ENCODE measurements at regions of chr2 and their contacts with region 1.

Region 1: GRCh38 chr2:74458132-74458925 is at the start of gene WBP1:
- DNase-seq: peak; percentile 87
- ATAC-seq: peak; percentile 81
- H3K4me3 Mint-ChIP-seq: peak within 1 kb of the TSS; percentile 99
- H3K27ac Mint-ChIP-seq: peak within 1 kb of the TSS; percentile 100
- H3K4me1 Mint-ChIP-seq: peaks cover 62% of the 10 kb centered on the region
- H3K27me3 Mint-ChIP-seq: no peaks in the 10 kb centered on the region
- CTCF ChIP-seq: no peak
- total RNA-seq, gene WBP1: 61.4 and 65.3 TPM in 2 replicates

Region 2: GRCh38 chr2:74472086-74472944 is 14.0 kb after region 1 on chr2 and contains the start of gene MRPL53:
- CTCF ChIA-PET with region 1: interaction called, 3 read pairs
- POLR2A ChIA-PET with region 1: interaction called, 127 read pairs
- intact Hi-C with region 1: loop called (anchors 1 kb)
- DNase-seq: peak; percentile 91
- ATAC-seq: peak; percentile 89
- H3K4me3 Mint-ChIP-seq: peak within 1 kb of the TSS; percentile 97
- H3K27ac Mint-ChIP-seq: peak within 1 kb of the TSS; percentile 97
- H3K4me1 Mint-ChIP-seq: peaks cover 23% of the 10 kb centered on the region
- H3K27me3 Mint-ChIP-seq: no peaks in the 10 kb centered on the region
- CTCF ChIP-seq: no peak
- total RNA-seq, gene MRPL53: 86.9 and 98.8 TPM in 2 replicates